Panc1 (cell line): ENCODE measurements at regions of chr12 and their contacts with region 1.

Region 1: GRCh38 chr12:87846040-87846439 is 183.2 kb downstream of the C12orf50 start:
- DNase-seq: no peak
- ATAC-seq: no peak
- H3K4me3 ChIP-seq: no peak overlapping the region
- H3K27ac ChIP-seq: no peak overlapping the region
- H3K4me1 ChIP-seq: no peaks in the 10 kb centered on the region
- H3K27me3 ChIP-seq: no peaks in the 10 kb centered on the region
- CTCF ChIP-seq: no peak

Region 2: DNA sequence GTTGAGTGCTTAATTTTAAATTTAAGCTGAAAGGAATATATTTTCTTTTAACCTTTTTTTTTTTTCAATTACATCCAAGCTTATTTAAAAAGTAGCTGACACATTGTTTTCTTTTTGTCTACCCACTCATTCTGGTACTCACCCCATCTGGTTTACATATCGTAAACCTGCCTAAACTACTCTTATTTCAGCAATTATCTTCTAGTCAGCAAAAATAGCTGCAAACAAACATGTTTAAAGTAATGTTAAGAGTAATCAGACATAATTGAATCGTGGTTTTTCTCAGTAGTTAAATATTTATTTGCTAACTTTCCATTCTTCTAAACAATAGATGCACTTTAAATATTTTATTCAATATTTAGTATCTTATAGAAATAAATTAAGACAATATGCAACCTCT is 1097.1 kb before region 1 on chr12:
- CTCF ChIA-PET with region 1: interaction called, 10 read pairs
- POLR2A ChIA-PET with region 1: no interaction called
- in situ Hi-C with region 1: no loop called
- intact Hi-C with region 1: no loop called
- DNase-seq: no peak
- ATAC-seq: no peak
- H3K4me3 ChIP-seq: no peak overlapping the region
- H3K27ac ChIP-seq: no peak overlapping the region
- H3K4me1 ChIP-seq: no peaks in the 10 kb centered on the region
- H3K27me3 ChIP-seq: no peaks in the 10 kb centered on the region
- CTCF ChIP-seq: no peak

Region 3: GRCh38 chr12:87413784-87414183 is 432.3 kb before region 1 on chr12:
- CTCF ChIA-PET with region 1: no interaction called
- POLR2A ChIA-PET with region 1: no interaction called
- in situ Hi-C with region 1: no loop called
- intact Hi-C with region 1: no loop called
- DNase-seq: no peak
- ATAC-seq: no peak
- H3K4me3 ChIP-seq: no peak overlapping the region
- H3K27ac ChIP-seq: no peak overlapping the region
- H3K4me1 ChIP-seq: no peaks in the 10 kb centered on the region; the same call in 1 of the 2 replicates
- H3K27me3 ChIP-seq: no peaks in the 10 kb centered on the region
- CTCF ChIP-seq: no peak

Region 4: GRCh38 chr12:87995581-87996178 is 149.6 kb after region 1 on chr12:
- CTCF ChIA-PET with region 1: no interaction called
- POLR2A ChIA-PET with region 1: no interaction called
- in situ Hi-C with region 1: no loop called
- intact Hi-C with region 1: no loop called
- DNase-seq: peak; percentile 54
- ATAC-seq: peak; percentile 95
- H3K4me3 ChIP-seq: no peak overlapping the region
- H3K27ac ChIP-seq: no peak overlapping the region
- H3K4me1 ChIP-seq: no peaks in the 10 kb centered on the region
- H3K27me3 ChIP-seq: no peaks in the 10 kb centered on the region
- CTCF ChIP-seq: peak; percentile 83